ENCODE measurements at regions of chr6 and their contacts with region 1.

Region 1: DNA sequence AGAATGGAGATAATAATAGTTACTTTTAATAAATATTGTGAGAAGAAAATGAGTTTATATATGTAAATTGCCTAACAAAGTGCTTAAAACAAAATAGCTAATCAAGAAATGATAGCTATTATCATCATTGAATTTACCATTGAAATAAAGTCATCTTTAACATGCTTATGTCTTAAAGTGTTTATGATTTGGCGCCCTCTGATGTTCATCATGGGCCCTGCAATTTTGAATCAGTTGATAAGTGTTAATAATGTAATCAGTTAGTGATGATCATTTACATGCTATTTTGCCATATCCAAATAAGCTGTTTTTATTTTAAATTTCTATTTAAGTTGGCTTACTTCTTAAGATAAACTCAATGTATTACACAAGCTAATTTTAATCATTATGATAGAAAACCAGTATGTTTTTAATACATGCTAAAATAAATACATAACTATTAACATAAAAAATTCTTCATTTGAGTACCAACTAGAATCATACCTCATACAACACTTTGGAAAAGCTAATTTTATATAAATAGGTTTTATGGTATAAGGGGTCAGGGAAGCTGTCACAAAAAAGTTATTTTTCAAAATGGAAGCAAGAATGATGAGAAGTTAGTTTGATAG is 39.2 kb upstream of the TPD52L1 start:
- DNase-seq: peak in 4 of 5 donors; percentile 26 to 52 (median 33)
- H3K4me3 ChIP-seq: no peak overlapping the region
- H3K4me3 Mint-ChIP-seq: no peak overlapping the region
- H3K27ac ChIP-seq: no peak overlapping the region
- H3K27ac Mint-ChIP-seq: no peak overlapping the region
- H3K4me1 ChIP-seq: no peaks in the 10 kb centered on the region
- H3K4me1 Mint-ChIP-seq: no peaks in the 10 kb centered on the region
- H3K27me3 ChIP-seq: no peaks in the 10 kb centered on the region
- H3K27me3 Mint-ChIP-seq: peaks cover 0 to 1% of the 10 kb centered on the region in 2 donors

Region 2: GRCh38 chr6:123415844-123416468 is 1698.4 kb before region 1 on chr6:
- CTCF ChIA-PET with region 1: no interaction called
- POLR2A ChIA-PET with region 1: no interaction called
- intact Hi-C with region 1: loop called (anchors 5 kb)
- DNase-seq: peak in 3 of 5 donors; percentile 3 to 11 (median 9)
- H3K4me3 ChIP-seq: no peak overlapping the region
- H3K4me3 Mint-ChIP-seq: no peak overlapping the region
- H3K27ac ChIP-seq: no peak overlapping the region
- H3K27ac Mint-ChIP-seq: no peak overlapping the region
- H3K4me1 ChIP-seq: no peaks in the 10 kb centered on the region
- H3K4me1 Mint-ChIP-seq: no peaks in the 10 kb centered on the region
- H3K27me3 ChIP-seq: no peaks in the 10 kb centered on the region
- H3K27me3 Mint-ChIP-seq: no peaks in the 10 kb centered on the region

Region 3: GRCh38 chr6:123802697-123803496 is 1311.5 kb before region 1 on chr6:
- CTCF ChIA-PET with region 1: interaction called, 12 read pairs
- POLR2A ChIA-PET with region 1: no interaction called
- intact Hi-C with region 1: no loop called
- DNase-seq: peak in 4 of 5 donors; percentile 17 to 35 (median 34)
- H3K4me3 ChIP-seq: no peak overlapping the region
- H3K4me3 Mint-ChIP-seq: peak overlapping the region; percentile 21 to 75 (median 52)
- H3K27ac ChIP-seq: no peak overlapping the region
- H3K27ac Mint-ChIP-seq: no peak overlapping the region
- H3K4me1 ChIP-seq: peaks cover 3% of the 10 kb centered on the region
- H3K4me1 Mint-ChIP-seq: peaks cover 2 to 15% (median 9%) of the 10 kb centered on the region in 4 donors
- H3K27me3 ChIP-seq: peaks cover 12% of the 10 kb centered on the region
- H3K27me3 Mint-ChIP-seq: peaks cover 17 to 26% of the 10 kb centered on the region in 2 donors

Region 4: DNA sequence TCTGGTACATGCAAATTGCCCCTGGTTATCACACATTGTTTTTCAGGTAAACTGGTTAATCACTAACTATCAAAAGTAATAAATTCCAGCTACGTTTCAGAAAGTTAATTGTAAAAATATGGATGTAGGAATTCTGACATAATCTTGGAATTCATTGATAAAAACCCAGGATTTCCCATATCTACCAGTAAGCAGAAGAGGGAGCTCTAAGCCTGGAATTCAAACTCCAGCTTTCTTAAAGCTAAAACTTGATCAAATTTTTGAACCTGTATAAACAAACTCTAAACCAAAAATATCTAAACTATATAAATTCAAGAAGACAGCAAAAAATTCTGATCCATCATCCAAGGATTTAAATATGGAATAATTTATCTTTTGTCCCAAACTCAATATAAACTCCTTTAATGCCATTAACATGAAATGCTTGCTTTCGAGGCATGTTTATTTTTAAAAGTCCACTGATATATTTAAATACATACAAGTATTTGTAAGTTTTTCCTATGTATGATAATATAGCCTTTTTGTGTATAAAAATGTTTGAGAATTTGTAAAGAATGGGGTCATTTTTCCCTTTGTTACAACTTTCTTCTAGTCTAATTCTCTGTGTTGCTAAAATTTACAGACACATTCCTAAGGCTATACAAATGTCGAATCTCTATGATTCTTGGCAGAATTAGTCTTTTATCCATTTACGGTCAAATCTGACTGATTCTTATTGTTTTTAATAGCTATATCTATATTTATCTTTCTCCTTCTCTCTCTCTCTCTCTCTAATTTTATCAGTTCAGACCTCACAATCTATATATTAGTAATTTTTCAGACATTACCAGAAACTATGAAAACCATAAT is 243.5 kb before region 1 on chr6:
- CTCF ChIA-PET with region 1: interaction called, 48 read pairs
- POLR2A ChIA-PET with region 1: no interaction called
- intact Hi-C with region 1: no loop called
- DNase-seq: peak in 1 of 5 donors; percentile 12
- H3K4me3 ChIP-seq: no peak overlapping the region
- H3K4me3 Mint-ChIP-seq: no peak overlapping the region
- H3K27ac ChIP-seq: no peak overlapping the region
- H3K27ac Mint-ChIP-seq: no peak overlapping the region
- H3K4me1 ChIP-seq: no peaks in the 10 kb centered on the region
- H3K4me1 Mint-ChIP-seq: no peaks in the 10 kb centered on the region
- H3K27me3 ChIP-seq: no peaks in the 10 kb centered on the region
- H3K27me3 Mint-ChIP-seq: peaks cover 3 to 6% of the 10 kb centered on the region in 2 donors

Region 5: GRCh38 chr6:125066964-125067363 is 47.4 kb before region 1 on chr6:
- CTCF ChIA-PET with region 1: interaction called, 21 read pairs
- POLR2A ChIA-PET with region 1: no interaction called
- intact Hi-C with region 1: loop called (anchors 1 kb)
- DNase-seq: peak; percentile 52 to 75 (median 55)
- H3K4me3 ChIP-seq: no peak overlapping the region
- H3K4me3 Mint-ChIP-seq: no peak overlapping the region
- H3K27ac ChIP-seq: no peak overlapping the region
- H3K27ac Mint-ChIP-seq: no peak overlapping the region
- H3K4me1 ChIP-seq: peaks cover 34% of the 10 kb centered on the region
- H3K4me1 Mint-ChIP-seq: peaks cover 0 to 1% (median 0%) of the 10 kb centered on the region in 4 donors
- H3K27me3 ChIP-seq: no peaks in the 10 kb centered on the region
- H3K27me3 Mint-ChIP-seq: no peaks in the 10 kb centered on the region

Region 6: DNA sequence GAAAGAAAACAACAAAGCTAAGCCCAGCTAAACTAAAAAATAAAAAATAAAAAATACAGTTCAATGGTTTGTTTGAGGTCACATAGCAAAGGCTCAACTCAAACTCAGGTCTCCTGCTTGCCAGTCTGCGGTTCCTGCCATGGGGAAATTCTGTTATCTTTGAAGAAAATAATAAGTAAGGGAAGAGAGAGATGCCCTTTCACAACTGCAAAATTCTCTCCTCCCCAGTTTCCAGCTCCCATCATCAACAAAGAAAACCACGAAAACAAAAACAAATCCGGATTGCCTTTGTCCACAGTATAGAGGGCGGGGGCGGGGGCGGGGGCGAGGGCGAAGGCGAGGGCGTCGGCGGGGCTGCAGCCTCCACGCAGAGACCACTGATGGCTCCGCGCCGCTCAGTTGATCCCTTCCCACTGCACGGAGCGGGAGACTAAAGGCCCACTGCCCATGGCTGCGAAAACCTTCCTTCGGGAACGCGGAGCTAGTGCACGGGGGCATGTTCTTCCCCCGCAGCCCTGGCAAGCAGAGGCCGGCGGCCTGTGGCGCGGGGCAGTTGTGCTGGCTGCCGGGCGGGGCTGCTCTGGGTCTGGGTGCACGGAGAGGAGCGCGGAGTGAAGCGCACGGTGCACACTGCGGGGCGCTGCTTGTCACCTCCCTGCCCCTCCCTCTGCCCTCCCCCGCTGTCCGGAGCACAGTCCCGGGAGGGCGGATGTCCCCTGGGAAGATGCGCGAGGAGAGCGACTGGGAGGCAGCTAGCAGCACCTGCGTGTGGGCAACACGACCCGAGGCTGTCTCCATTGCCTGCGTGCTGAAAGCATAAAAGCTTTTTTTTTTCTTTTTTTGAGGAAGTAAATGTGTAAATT is 14.9 kb before region 1 on chr6:
- CTCF ChIA-PET with region 1: interaction called, 14 read pairs
- POLR2A ChIA-PET with region 1: no interaction called
- intact Hi-C with region 1: no loop called
- DNase-seq: peak in 3 of 5 donors; percentile 4 to 25 (median 17)
- H3K4me3 ChIP-seq: no peak overlapping the region
- H3K4me3 Mint-ChIP-seq: peak overlapping the region; percentile 70 to 83 (median 79)
- H3K27ac ChIP-seq: no peak overlapping the region
- H3K27ac Mint-ChIP-seq: peak overlapping the region in 2 of 7 donors; percentile 28 to 47
- H3K4me1 ChIP-seq: peaks cover 6% of the 10 kb centered on the region
- H3K4me1 Mint-ChIP-seq: peaks cover 8 to 28% (median 12%) of the 10 kb centered on the region in 4 donors
- H3K27me3 ChIP-seq: no peaks in the 10 kb centered on the region
- H3K27me3 Mint-ChIP-seq: peaks cover 5 to 9% of the 10 kb centered on the region in 2 donors

Measured in CD4-positive, alpha-beta memory T cell (primary cell).